ENCODE measurements at regions of chr12 and their contacts with region 1.

Region 1: GRCh38 chr12:4276524-4277204 is 3.1 kb downstream of the CCND2 start:
- DNase-seq: peak; percentile 92
- H3K4me3 Mint-ChIP-seq: peak overlapping the region; percentile 97
- H3K27ac Mint-ChIP-seq: peak overlapping the region; percentile 99
- H3K4me1 Mint-ChIP-seq: peaks cover 58% of the 10 kb centered on the region
- H3K27me3 Mint-ChIP-seq: no peaks in the 10 kb centered on the region

Region 2: DNA sequence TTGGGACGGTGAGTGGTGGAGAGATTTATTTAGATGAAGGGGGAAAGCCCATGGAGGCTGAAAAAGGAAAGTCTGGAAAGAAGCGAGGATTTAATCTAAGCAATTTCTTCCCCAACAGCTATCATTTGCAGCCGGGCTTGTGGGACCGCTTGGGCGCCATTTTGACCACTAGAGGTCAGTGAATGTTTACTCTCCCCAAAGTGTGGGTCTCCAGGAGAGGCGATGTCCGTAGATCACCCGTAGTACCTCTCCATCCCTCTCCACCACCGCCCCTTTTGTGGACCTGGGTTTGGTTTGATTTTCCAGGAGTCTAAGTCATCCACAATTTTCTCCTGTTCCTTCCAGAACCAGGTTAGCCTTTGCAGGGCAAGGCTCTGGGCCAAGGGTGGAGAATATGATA is 312.2 kb before region 1 on chr12:
- CTCF ChIA-PET with region 1: interaction called, 12 read pairs
- POLR2A ChIA-PET with region 1: interaction called, 3 read pairs
- intact Hi-C with region 1: no loop called
- DNase-seq: no peak
- H3K4me3 Mint-ChIP-seq: no peak overlapping the region
- H3K27ac Mint-ChIP-seq: no peak overlapping the region
- H3K4me1 Mint-ChIP-seq: peaks cover 18% of the 10 kb centered on the region
- H3K27me3 Mint-ChIP-seq: no peaks in the 10 kb centered on the region

Region 3: GRCh38 chr12:4006743-4007142 is 269.9 kb before region 1 on chr12:
- CTCF ChIA-PET with region 1: interaction called, 21 read pairs
- POLR2A ChIA-PET with region 1: no interaction called
- intact Hi-C with region 1: no loop called
- DNase-seq: no peak
- H3K4me3 Mint-ChIP-seq: no peak overlapping the region
- H3K27ac Mint-ChIP-seq: no peak overlapping the region
- H3K4me1 Mint-ChIP-seq: no peaks in the 10 kb centered on the region
- H3K27me3 Mint-ChIP-seq: no peaks in the 10 kb centered on the region

Region 4: DNA sequence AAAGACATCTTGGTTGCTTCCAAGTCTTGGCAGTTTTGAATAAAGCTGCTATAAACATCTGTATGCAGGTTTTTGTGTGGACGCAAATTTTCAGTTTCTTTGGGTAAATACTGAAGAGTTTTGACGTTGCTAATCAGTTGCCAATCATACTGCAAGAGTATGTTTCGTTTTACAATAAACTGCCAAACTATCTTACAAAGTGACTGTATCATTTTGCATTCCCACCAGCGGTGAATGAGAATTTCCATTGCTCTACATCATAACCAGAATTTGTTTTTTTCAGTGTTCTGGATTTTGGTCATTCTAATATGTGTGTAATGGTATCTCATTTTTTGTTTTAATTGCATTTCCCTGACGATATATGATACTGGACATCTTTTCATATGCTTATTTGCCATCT is 212.7 kb before region 1 on chr12:
- CTCF ChIA-PET with region 1: no interaction called
- POLR2A ChIA-PET with region 1: no interaction called
- intact Hi-C with region 1: loop called (anchors 5 kb)
- DNase-seq: no peak
- H3K4me3 Mint-ChIP-seq: no peak overlapping the region
- H3K27ac Mint-ChIP-seq: peak overlapping the region; percentile 56
- H3K4me1 Mint-ChIP-seq: peaks cover 33% of the 10 kb centered on the region
- H3K27me3 Mint-ChIP-seq: no peaks in the 10 kb centered on the region

Region 5: GRCh38 chr12:4118017-4118510 is 158.6 kb before region 1 on chr12:
- CTCF ChIA-PET with region 1: interaction called, 92 read pairs
- POLR2A ChIA-PET with region 1: interaction called, 13 read pairs
- intact Hi-C with region 1: loop called (anchors 1 kb)
- DNase-seq: no peak
- H3K4me3 Mint-ChIP-seq: peak overlapping the region; percentile 33
- H3K27ac Mint-ChIP-seq: peak overlapping the region; percentile 79
- H3K4me1 Mint-ChIP-seq: peaks cover 59% of the 10 kb centered on the region
- H3K27me3 Mint-ChIP-seq: peaks cover 8% of the 10 kb centered on the region

Region 6: GRCh38 chr12:4215229-4216186 is 61.2 kb before region 1 on chr12:
- CTCF ChIA-PET with region 1: interaction called, 15 read pairs
- POLR2A ChIA-PET with region 1: interaction called, 23 read pairs
- intact Hi-C with region 1: no loop called
- DNase-seq: peak; percentile 70
- H3K4me3 Mint-ChIP-seq: peak overlapping the region; percentile 59
- H3K27ac Mint-ChIP-seq: peak overlapping the region; percentile 86
- H3K4me1 Mint-ChIP-seq: peaks cover 36% of the 10 kb centered on the region
- H3K27me3 Mint-ChIP-seq: no peaks in the 10 kb centered on the region

Region 7: DNA sequence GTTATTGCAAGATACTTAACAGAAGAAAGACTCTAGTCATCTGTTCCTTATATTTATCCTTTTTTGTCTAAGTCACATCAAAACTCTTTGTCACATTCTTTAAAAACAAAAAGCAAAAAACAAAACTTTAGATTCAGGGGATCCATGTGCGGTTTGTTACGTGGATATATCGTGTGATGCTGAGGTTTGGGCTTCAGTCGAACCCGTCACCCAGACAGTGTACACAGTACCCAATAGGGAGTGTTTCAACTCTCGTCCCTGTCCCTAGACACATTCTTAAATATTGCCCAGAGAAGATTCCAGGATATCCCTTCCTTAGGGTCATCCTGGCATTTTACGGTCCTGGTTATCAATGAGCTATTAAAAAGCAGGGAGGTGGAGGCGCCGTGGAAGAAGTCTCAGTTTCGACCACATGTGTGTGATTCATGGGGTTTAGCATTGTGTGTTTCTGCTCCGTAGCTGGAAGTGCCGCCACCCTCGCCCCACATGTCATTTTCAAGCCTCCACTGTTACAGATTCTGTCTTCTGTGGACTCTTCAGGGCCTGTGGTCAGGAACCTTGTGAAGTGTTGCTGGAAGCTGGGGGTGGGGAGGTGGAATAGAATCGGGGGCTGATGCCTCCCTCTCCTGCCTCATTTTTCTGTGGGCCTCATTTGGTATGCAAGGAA is 16.8 kb after region 1 on chr12:
- CTCF ChIA-PET with region 1: interaction called, 36 read pairs
- POLR2A ChIA-PET with region 1: interaction called, 27 read pairs
- intact Hi-C with region 1: no loop called
- DNase-seq: peak; percentile 77
- H3K4me3 Mint-ChIP-seq: peak overlapping the region; percentile 59
- H3K27ac Mint-ChIP-seq: peak overlapping the region; percentile 92
- H3K4me1 Mint-ChIP-seq: peaks cover 81% of the 10 kb centered on the region
- H3K27me3 Mint-ChIP-seq: no peaks in the 10 kb centered on the region

Region 8: DNA sequence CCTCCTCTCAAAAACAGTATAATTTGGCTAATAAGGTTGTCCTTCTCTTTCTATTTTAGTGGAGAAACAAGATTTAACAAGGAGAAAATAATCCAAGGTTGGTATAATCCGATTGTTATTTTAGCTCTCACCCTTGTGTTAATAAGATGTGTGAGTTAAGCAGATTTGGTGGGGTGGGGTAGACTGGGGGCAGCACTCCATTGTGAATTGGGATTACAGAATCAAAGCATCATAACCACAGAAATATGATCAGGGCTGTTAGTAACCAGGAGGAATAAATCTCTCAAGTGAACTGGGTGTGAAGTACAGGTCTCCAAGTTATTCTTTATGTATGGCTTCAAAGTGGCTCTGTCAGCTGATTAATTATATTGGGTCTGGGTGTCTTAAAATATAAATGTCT is 54.6 kb after region 1 on chr12:
- CTCF ChIA-PET with region 1: no interaction called
- POLR2A ChIA-PET with region 1: no interaction called
- intact Hi-C with region 1: no loop called
- DNase-seq: no peak
- H3K4me3 Mint-ChIP-seq: no peak overlapping the region
- H3K27ac Mint-ChIP-seq: no peak overlapping the region
- H3K4me1 Mint-ChIP-seq: peaks cover 7% of the 10 kb centered on the region
- H3K27me3 Mint-ChIP-seq: no peaks in the 10 kb centered on the region